ENCODE measurements at regions of chr5 and their contacts with region 1.

Region 1: GRCh38 chr5:142888469-142889085 is 118.4 kb downstream of the ARHGAP26 start:
- DNase-seq: peak; percentile 45

Region 2: GRCh38 chr5:142726188-142726731 is 162.3 kb before region 1 on chr5:
- in situ Hi-C with region 1: loop called (anchors 10 kb)
- DNase-seq: peak; percentile 23

Region 3: GRCh38 chr5:143174714-143175398 is 286.3 kb after region 1 on chr5:
- in situ Hi-C with region 1: no loop called
- DNase-seq: no peak